ENCODE measurements at regions of chr16 and their contacts with region 1.

Region 1: GRCh38 chr16:21656795-21657768 is 4.7 kb upstream of the IGSF6 start:
- DNase-seq: peak; percentile 69
- H3K27ac ChIP-seq: no peak overlapping the region
- CTCF ChIP-seq: peak; percentile 82

Region 2: DNA sequence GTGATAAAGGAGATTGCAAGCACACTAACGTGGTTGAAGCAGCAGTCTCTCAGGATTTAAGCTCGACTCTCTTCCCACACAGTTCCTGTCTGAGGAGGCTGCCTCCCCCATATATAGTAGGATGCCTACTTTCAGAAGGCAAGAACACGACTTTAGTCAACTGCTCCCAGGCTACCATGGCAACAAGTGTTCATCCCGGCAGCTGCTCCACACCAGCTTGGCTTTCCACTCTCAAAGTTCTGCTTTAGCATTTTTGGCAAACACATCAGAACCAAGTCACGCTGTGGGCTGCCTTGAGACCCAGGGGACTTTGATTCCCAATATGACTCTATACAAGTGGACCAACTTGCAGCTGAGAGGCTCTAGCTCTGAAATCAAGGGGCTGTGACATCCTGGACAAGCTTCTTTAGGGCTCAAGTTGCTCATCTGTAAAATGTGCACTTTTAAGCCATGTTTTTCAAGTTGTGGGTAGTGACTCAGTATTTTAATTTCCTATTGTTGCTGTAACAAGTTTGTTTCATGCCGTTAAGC is 462.2 kb before region 1 on chr16:
- CTCF ChIA-PET with region 1: no interaction called
- POLR2A ChIA-PET with region 1: no interaction called
- DNase-seq: no peak
- H3K27ac ChIP-seq: no peak overlapping the region
- CTCF ChIP-seq: no peak

Region 3: GRCh38 chr16:21626659-21627277 is 30.3 kb before region 1 on chr16:
- CTCF ChIA-PET with region 1: no interaction called
- POLR2A ChIA-PET with region 1: no interaction called
- DNase-seq: peak; percentile 73
- H3K27ac ChIP-seq: no peak overlapping the region
- CTCF ChIP-seq: no peak

Region 4: GRCh38 chr16:21642861-21643260 is 14.2 kb before region 1 on chr16:
- CTCF ChIA-PET with region 1: interaction called, 23 read pairs
- POLR2A ChIA-PET with region 1: no interaction called
- DNase-seq: no peak
- H3K27ac ChIP-seq: no peak overlapping the region
- CTCF ChIP-seq: no peak

Region 5: DNA sequence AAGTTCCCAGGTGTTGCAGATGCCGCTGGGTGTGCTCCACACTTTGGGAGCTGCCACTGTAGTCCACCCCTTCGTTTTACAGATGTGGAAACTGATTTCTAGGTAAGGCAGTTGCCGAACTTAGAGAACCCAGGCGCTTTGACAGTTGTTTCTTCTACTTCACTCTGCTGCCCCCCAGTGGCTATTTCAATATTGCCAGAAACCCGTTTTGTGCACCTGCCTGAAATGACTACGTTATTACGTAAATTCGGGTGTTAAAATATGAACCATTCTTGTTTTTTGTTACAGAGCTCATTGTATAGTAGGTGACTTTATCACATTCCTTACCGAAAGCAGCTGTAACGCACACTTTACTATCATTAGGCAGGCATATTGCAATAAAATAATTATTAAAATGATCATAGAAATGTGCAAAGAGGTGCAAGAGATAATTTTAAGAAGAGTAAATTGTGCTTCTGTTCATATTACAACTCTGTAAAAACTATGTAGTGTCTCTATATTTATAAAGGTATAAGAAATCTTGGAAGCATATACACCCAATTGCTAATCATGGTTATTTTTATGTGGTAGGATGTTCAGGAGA is 51.5 kb after region 1 on chr16:
- CTCF ChIA-PET with region 1: interaction called, 31 read pairs
- POLR2A ChIA-PET with region 1: no interaction called
- DNase-seq: peak; percentile 70
- H3K27ac ChIP-seq: no peak overlapping the region
- CTCF ChIP-seq: peak; percentile 82